GM12878 (cell line): ENCODE measurements at regions of chr3 and their contacts with region 1.

Region 1: DNA sequence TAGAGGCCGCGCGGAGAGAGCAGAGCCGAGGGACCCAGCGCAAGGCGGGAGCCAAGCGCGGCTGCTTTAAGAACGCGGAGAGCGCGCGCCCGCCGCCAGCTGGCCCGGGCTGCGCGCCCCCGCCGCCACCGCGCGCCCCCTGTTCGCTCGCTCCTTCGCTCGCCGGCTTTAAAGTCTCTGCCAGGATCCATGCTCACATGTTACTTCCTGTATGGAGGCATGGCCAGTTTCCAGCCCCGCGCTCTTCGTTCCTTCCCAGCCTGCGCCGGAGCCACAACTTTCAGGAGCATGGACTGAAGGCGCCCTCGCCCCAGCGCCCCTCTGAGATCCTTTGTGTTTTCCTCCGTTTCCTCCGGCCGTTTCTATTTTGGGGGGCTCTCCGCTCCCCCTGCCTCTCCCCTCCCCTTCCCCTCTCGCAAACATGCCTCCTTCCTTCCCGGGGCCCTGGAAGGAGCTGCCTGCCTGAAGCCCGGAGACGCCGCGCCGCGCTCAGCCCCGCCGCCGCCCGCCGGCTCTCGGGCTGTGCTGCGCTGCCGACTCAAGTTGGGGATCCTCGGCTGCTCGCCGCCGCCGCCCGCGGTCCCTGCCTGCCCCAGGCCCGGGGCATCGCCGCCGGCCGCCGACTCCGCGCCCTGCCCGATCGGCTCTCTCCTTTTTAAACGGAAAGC is at the start of gene PTPRG:
- DNase-seq: no peak
- ATAC-seq: peak; percentile 61
- H3K4me3 ChIP-seq: peak within 1 kb of the TSS; percentile 59
- H3K27ac ChIP-seq: no peak within 1 kb of the TSS
- H3K4me1 ChIP-seq: no peaks in the 10 kb centered on the region
- H3K27me3 ChIP-seq: peaks cover 5 to 20% of the 10 kb centered on the region in 2 experiments
- CTCF ChIP-seq: no peak
- EP300 ChIP-seq: no peak
- POLR2A ChIP-seq: no peak
- RAD21 ChIP-seq: no peak
- polyA plus RNA-seq, gene PTPRG: 0.29 to 0.42 TPM

Region 2: GRCh38 chr3:60890226-60890625 is 671.3 kb before region 1 on chr3:
- CTCF ChIA-PET with region 1: no interaction called
- POLR2A ChIA-PET with region 1: no interaction called
- RAD21 ChIA-PET with region 1: no interaction called
- SMC1A ChIA-PET with region 1: no interaction called
- in situ Hi-C with region 1: no loop called
- intact Hi-C with region 1: no loop called
- DNase-seq: no peak
- ATAC-seq: no peak
- H3K4me3 ChIP-seq: no peak overlapping the region
- H3K27ac ChIP-seq: no peak overlapping the region
- H3K4me1 ChIP-seq: no peaks in the 10 kb centered on the region
- H3K27me3 ChIP-seq: no peaks in the 10 kb centered on the region
- CTCF ChIP-seq: no peak
- EP300 ChIP-seq: no peak
- POLR2A ChIP-seq: no peak
- RAD21 ChIP-seq: no peak

Region 3: DNA sequence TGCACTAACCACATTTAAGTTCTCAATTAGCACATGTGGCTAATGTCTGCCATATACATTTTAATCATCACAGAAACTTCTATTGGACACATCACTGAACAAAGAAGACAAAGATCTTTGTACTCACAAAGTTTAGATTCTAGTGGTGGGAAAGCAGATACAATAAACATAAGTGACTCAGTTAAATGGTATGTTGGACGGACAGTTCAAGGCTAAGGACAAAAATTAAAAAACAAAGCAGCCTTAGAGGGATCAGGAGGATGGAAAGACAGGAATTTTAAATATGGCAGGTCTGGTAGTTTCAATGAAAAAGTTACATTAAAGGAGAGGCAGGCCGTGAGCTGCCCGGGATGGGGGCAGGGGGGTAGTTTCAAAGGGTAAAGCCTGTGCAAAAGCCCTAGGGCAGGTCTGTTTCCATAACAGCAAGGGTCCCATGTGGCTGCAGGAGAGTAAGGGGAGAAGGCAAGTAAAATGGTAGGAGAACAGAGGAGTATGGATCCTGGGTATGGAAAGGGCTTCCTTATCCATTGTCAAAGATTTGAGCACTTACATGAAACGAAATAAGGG is 531.0 kb before region 1 on chr3:
- CTCF ChIA-PET with region 1: no interaction called
- POLR2A ChIA-PET with region 1: no interaction called
- RAD21 ChIA-PET with region 1: no interaction called
- SMC1A ChIA-PET with region 1: no interaction called
- in situ Hi-C with region 1: no loop called
- intact Hi-C with region 1: no loop called
- DNase-seq: no peak
- ATAC-seq: no peak
- H3K4me3 ChIP-seq: no peak overlapping the region
- H3K27ac ChIP-seq: no peak overlapping the region
- H3K4me1 ChIP-seq: no peaks in the 10 kb centered on the region
- H3K27me3 ChIP-seq: no peaks in the 10 kb centered on the region
- CTCF ChIP-seq: no peak
- EP300 ChIP-seq: no peak
- POLR2A ChIP-seq: no peak
- RAD21 ChIP-seq: no peak

Region 4: DNA sequence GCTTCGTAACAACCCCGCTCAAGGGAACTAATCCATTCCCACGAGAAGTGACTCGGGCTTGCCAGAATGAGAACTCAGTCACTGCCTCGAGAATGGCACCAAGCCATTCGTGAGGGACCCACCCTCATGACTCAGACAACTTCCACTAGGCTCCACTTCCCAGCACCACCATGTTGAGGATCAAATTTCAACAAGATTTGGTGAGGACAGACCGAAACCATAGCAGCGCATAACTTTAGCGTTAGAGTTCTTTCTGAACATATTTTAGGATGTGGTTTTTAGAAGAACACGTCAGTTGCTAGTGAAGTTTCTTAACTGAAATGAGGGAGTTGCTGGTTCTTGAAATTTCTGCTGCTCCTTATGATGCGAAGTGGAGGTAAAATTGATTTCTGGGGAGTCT is 13.3 kb after region 1 on chr3:
- CTCF ChIA-PET with region 1: interaction called, 51 read pairs
- POLR2A ChIA-PET with region 1: interaction called, 8 read pairs
- RAD21 ChIA-PET with region 1: interaction called, 29 read pairs
- SMC1A ChIA-PET with region 1: interaction called, 52 read pairs
- in situ Hi-C with region 1: no loop called
- intact Hi-C with region 1: no loop called
- DNase-seq: no peak
- ATAC-seq: peak; percentile 28
- H3K4me3 ChIP-seq: no peak overlapping the region
- H3K27ac ChIP-seq: no peak overlapping the region
- H3K4me1 ChIP-seq: no peaks in the 10 kb centered on the region
- H3K27me3 ChIP-seq: no peaks in the 10 kb centered on the region
- CTCF ChIP-seq: no peak
- EP300 ChIP-seq: no peak
- POLR2A ChIP-seq: no peak
- RAD21 ChIP-seq: no peak

Region 5: DNA sequence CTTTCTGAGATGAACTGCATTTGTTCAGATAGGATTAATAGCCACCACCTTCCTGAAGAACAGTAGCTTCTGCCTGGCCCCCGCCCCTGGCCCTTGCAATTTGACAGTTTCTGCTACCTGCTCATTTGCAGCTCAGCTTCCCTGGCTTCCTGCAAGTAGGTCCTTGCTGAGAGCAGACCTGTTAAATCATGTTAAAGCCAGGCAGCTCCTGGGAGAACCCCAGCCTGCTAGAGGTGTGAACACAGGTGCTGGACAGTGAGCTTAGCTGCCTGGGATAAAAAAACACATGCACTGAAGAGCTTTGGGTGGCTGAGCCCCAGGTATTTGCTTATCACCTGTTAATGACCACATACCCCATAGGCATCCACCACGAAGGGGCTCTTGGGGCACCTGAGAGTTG is 143.3 kb after region 1 on chr3:
- CTCF ChIA-PET with region 1: interaction called, 3 read pairs
- POLR2A ChIA-PET with region 1: interaction called, 5 read pairs
- RAD21 ChIA-PET with region 1: interaction called, 9 read pairs
- SMC1A ChIA-PET with region 1: interaction called, 18 read pairs
- in situ Hi-C with region 1: no loop called
- intact Hi-C with region 1: no loop called
- DNase-seq: no peak
- ATAC-seq: peak; percentile 40
- H3K4me3 ChIP-seq: no peak overlapping the region
- H3K27ac ChIP-seq: no peak overlapping the region
- H3K4me1 ChIP-seq: no peaks in the 10 kb centered on the region
- H3K27me3 ChIP-seq: no peaks in the 10 kb centered on the region
- CTCF ChIP-seq: no peak
- EP300 ChIP-seq: no peak
- POLR2A ChIP-seq: no peak
- RAD21 ChIP-seq: no peak

Region 6: DNA sequence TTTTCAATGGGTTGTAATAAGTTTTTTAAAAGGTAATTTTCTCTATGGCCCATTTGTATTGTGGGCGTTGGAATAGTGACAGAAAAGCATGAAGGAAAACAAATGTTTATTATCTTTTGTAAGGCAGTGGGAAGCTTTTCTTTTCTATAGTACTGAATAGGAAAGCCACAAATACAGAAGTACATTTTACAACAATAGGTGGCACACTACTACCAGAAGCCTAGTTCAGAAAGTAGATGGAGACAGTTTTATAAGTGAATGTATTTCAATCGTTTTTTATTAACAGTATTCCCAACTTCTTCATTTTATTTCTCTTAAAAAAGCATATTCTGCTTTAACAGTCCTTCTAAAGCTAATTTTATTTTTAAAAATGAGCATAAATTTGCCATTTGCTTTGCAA is 296.5 kb after region 1 on chr3:
- CTCF ChIA-PET with region 1: interaction called, 97 read pairs
- POLR2A ChIA-PET with region 1: interaction called, 6 read pairs
- RAD21 ChIA-PET with region 1: interaction called, 113 read pairs
- SMC1A ChIA-PET with region 1: interaction called, 97 read pairs
- in situ Hi-C with region 1: no loop called
- intact Hi-C with region 1: loop called (anchors 10 kb)
- DNase-seq: no peak
- ATAC-seq: peak; percentile 53
- H3K4me3 ChIP-seq: no peak overlapping the region
- H3K27ac ChIP-seq: no peak overlapping the region
- H3K4me1 ChIP-seq: no peaks in the 10 kb centered on the region
- H3K27me3 ChIP-seq: peaks cover 0 to 3% of the 10 kb centered on the region in 2 experiments; a peak in 1 of 4 replicates
- CTCF ChIP-seq: peak; percentile 27 to 65 (median 29); a peak in 3 of 6 replicates
- EP300 ChIP-seq: no peak
- POLR2A ChIP-seq: no peak
- RAD21 ChIP-seq: peak; percentile 62

Region 7: DNA sequence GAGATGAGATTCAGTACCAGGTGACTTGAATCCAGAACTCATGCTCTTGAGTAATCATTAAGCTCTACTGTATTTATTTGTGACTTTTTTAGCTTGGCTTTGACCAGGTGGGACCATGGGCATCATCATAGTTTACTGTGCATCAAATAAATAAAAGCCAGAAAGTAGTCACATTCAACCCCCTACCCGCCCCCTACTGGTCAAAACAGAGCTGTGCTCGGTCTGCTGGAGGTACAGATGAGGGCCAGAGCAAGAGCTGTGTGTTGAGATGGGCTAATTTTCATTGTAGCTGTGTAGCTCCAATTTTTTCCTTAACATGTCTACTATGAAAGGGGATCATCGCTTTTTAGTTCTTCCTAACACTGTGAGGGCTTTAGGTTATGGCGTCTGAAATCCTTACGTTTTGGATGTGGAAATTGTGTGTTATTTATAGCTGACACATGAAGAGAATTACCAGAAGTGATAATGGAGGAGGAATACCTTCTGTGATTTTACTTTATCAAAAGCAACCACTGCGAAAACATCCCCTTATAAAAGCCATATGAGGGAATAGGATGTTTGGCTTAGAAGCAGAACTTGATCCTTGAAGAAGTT is 374.9 kb after region 1 on chr3:
- CTCF ChIA-PET with region 1: interaction called, 35 read pairs
- POLR2A ChIA-PET with region 1: interaction called, 6 read pairs
- RAD21 ChIA-PET with region 1: interaction called, 30 read pairs
- SMC1A ChIA-PET with region 1: interaction called, 49 read pairs
- in situ Hi-C with region 1: no loop called
- intact Hi-C with region 1: loop called (anchors 10 kb)
- DNase-seq: no peak
- ATAC-seq: peak; percentile 79
- H3K4me3 ChIP-seq: no peak overlapping the region
- H3K27ac ChIP-seq: no peak overlapping the region
- H3K4me1 ChIP-seq: no peaks in the 10 kb centered on the region
- H3K27me3 ChIP-seq: no peaks in the 10 kb centered on the region
- CTCF ChIP-seq: peak; percentile 51 to 79 (median 76)
- EP300 ChIP-seq: no peak
- POLR2A ChIP-seq: no peak
- RAD21 ChIP-seq: peak; percentile 55

Region 8: GRCh38 chr3:62188681-62189383 is 627.3 kb after region 1 on chr3:
- CTCF ChIA-PET with region 1: interaction called, 85 read pairs
- POLR2A ChIA-PET with region 1: interaction called, 4 read pairs
- RAD21 ChIA-PET with region 1: interaction called, 70 read pairs
- SMC1A ChIA-PET with region 1: interaction called, 57 read pairs
- in situ Hi-C with region 1: loop called (anchors 10 kb)
- intact Hi-C with region 1: loop called (anchors 5 kb)
- DNase-seq: no peak
- ATAC-seq: peak; percentile 89
- H3K4me3 ChIP-seq: no peak overlapping the region
- H3K27ac ChIP-seq: no peak overlapping the region
- H3K4me1 ChIP-seq: no peaks in the 10 kb centered on the region
- H3K27me3 ChIP-seq: no peaks in the 10 kb centered on the region
- CTCF ChIP-seq: peak; percentile 71 to 82 (median 76)
- EP300 ChIP-seq: no peak
- POLR2A ChIP-seq: no peak
- RAD21 ChIP-seq: peak; percentile 78

Region 9: DNA sequence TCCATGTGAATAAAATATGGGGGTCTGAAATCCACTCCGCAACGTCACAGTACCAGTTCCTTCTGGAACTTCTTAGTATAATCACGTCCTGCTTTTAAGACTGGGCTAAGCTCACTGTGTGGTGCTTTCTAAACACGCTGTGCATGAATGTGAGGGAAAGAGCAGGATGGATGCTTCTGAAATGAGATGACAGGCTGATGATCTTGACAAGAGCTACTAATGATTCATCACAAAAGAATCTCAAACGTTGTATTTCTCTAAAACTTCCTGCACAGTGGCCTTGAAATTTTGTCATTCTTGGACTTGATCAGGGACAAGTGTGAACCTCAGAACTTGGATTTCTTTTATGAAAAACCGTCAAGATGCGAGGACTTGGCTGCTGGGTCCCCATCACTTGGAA is 1092.3 kb after region 1 on chr3:
- CTCF ChIA-PET with region 1: no interaction called
- POLR2A ChIA-PET with region 1: no interaction called
- RAD21 ChIA-PET with region 1: no interaction called
- SMC1A ChIA-PET with region 1: no interaction called
- in situ Hi-C with region 1: no loop called
- intact Hi-C with region 1: no loop called
- DNase-seq: no peak
- ATAC-seq: no peak
- H3K4me3 ChIP-seq: no peak overlapping the region
- H3K27ac ChIP-seq: no peak overlapping the region
- H3K4me1 ChIP-seq: no peaks in the 10 kb centered on the region
- H3K27me3 ChIP-seq: no peaks in the 10 kb centered on the region; a peak in 2 of 4 replicates
- CTCF ChIP-seq: no peak
- EP300 ChIP-seq: no peak
- POLR2A ChIP-seq: no peak
- RAD21 ChIP-seq: no peak